ENCODE measurements at regions of chr4 and their contacts with region 1.

Region 1: GRCh38 chr4:88823058-88823919 is 125.7 kb upstream of the NAP1L5 start:
- DNase-seq: peak; percentile 83 to 87 (median 85)
- H3K4me3 ChIP-seq: peak overlapping the region; percentile 68 to 93 (median 73)
- H3K4me3 Mint-ChIP-seq: peak overlapping the region; percentile 90 to 98
- H3K27ac ChIP-seq: peak overlapping the region; percentile 66 to 97
- H3K27ac Mint-ChIP-seq: peak overlapping the region; percentile 96 to 100 (median 98)
- H3K4me1 ChIP-seq: peaks cover 40 to 71% of the 10 kb centered on the region in 2 donors
- H3K4me1 Mint-ChIP-seq: peaks cover 43% of the 10 kb centered on the region
- H3K27me3 ChIP-seq: no peaks in the 10 kb centered on the region
- H3K27me3 Mint-ChIP-seq: no peaks in the 10 kb centered on the region
- CTCF ChIP-seq: no peak

Region 2: DNA sequence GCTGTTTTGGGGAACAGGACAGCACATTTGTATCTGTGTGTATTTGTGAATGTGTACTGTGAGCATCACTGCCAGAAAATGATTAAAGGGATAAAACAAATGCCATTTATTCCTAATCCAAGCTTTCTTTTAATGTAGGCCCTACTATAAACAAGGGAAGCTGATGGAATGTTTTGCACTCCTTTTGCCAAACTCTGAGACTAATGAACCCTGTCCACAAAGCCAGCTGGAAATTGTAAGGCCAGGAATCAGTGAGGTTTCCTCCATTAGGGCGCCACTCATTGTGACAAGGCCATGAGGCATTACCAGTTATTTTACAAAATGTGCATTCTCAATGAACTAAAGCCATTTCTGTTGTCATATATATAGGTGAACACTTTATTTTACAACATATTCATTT is 37.3 kb after region 1 on chr4:
- intact Hi-C with region 1: loop called in 1 of 2 experiments (anchors 5 kb)
- DNase-seq: no peak
- H3K4me3 ChIP-seq: no peak overlapping the region
- H3K4me3 Mint-ChIP-seq: no peak overlapping the region
- H3K27ac ChIP-seq: peak overlapping the region in 1 of 2 donors; percentile 83
- H3K27ac Mint-ChIP-seq: peak overlapping the region in 6 of 7 donors; percentile 33 to 98 (median 65)
- H3K4me1 ChIP-seq: peaks cover 41 to 42% of the 10 kb centered on the region in 2 donors
- H3K4me1 Mint-ChIP-seq: peaks cover 43% of the 10 kb centered on the region
- H3K27me3 ChIP-seq: no peaks in the 10 kb centered on the region
- H3K27me3 Mint-ChIP-seq: peaks cover 0 to 1% (median 0%) of the 10 kb centered on the region in 3 donors
- CTCF ChIP-seq: no peak

Region 3: GRCh38 chr4:88919056-88919455 is 95.8 kb after region 1 on chr4:
- intact Hi-C with region 1: no loop called
- DNase-seq: no peak
- H3K4me3 ChIP-seq: no peak overlapping the region
- H3K4me3 Mint-ChIP-seq: no peak overlapping the region
- H3K27ac ChIP-seq: no peak overlapping the region
- H3K27ac Mint-ChIP-seq: no peak overlapping the region
- H3K4me1 ChIP-seq: no peaks in the 10 kb centered on the region
- H3K4me1 Mint-ChIP-seq: no peaks in the 10 kb centered on the region
- H3K27me3 ChIP-seq: no peaks in the 10 kb centered on the region
- H3K27me3 Mint-ChIP-seq: no peaks in the 10 kb centered on the region
- CTCF ChIP-seq: no peak

Region 4: GRCh38 chr4:88953400-88953799 is 130.1 kb after region 1 on chr4:
- intact Hi-C with region 1: loop called in 1 of 2 experiments (anchors 10 kb)
- DNase-seq: peak; percentile 55 to 80 (median 68)
- H3K4me3 ChIP-seq: peak overlapping the region in 1 of 3 experiments; percentile 37
- H3K4me3 Mint-ChIP-seq: peak overlapping the region in 1 of 2 donors; percentile 30
- H3K27ac ChIP-seq: peak overlapping the region; percentile 48 to 49
- H3K27ac Mint-ChIP-seq: peak overlapping the region; percentile 57 to 89 (median 81)
- H3K4me1 ChIP-seq: peaks cover 62 to 68% of the 10 kb centered on the region in 2 donors
- H3K4me1 Mint-ChIP-seq: peaks cover 62% of the 10 kb centered on the region
- H3K27me3 ChIP-seq: no peaks in the 10 kb centered on the region
- H3K27me3 Mint-ChIP-seq: no peaks in the 10 kb centered on the region
- CTCF ChIP-seq: no peak

Region 5: DNA sequence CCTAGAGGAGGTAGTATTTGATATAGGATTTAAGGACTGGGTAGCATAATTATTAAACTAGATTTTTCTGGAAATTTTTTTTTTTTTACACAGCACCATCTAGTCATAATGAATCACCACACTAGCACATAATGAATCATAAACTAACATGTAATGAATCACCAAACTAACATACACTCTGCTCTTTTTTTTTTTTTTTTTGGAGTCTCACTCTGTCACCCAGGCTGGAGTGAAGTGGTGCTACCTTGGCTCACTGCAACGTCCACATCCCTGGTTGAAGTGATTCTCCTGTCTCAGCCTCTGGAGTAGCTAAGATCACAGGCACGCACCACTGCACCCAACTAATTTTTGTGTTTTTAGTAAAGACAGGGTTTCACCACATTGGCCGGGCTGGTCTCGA is 141.2 kb after region 1 on chr4:
- intact Hi-C with region 1: loop called (anchors 10 kb)
- DNase-seq: peak in 2 of 3 donors; percentile 10 to 35
- H3K4me3 ChIP-seq: no peak overlapping the region
- H3K4me3 Mint-ChIP-seq: no peak overlapping the region
- H3K27ac ChIP-seq: peak overlapping the region in 1 of 2 donors; percentile 82
- H3K27ac Mint-ChIP-seq: peak overlapping the region in 5 of 7 donors; percentile 36 to 84 (median 57)
- H3K4me1 ChIP-seq: peaks cover 37 to 52% of the 10 kb centered on the region in 2 donors
- H3K4me1 Mint-ChIP-seq: peaks cover 44% of the 10 kb centered on the region
- H3K27me3 ChIP-seq: no peaks in the 10 kb centered on the region
- H3K27me3 Mint-ChIP-seq: no peaks in the 10 kb centered on the region
- CTCF ChIP-seq: no peak

Region 6: GRCh38 chr4:89024051-89024675 is 200.9 kb after region 1 on chr4:
- intact Hi-C with region 1: loop called (anchors 5 kb)
- DNase-seq: peak; percentile 67 to 87 (median 77)
- H3K4me3 ChIP-seq: no peak overlapping the region
- H3K4me3 Mint-ChIP-seq: no peak overlapping the region
- H3K27ac ChIP-seq: no peak overlapping the region
- H3K27ac Mint-ChIP-seq: no peak overlapping the region
- H3K4me1 ChIP-seq: no peaks in the 10 kb centered on the region
- H3K4me1 Mint-ChIP-seq: peaks cover 5% of the 10 kb centered on the region
- H3K27me3 ChIP-seq: no peaks in the 10 kb centered on the region
- H3K27me3 Mint-ChIP-seq: no peaks in the 10 kb centered on the region
- CTCF ChIP-seq: peak; percentile 87

Region 7: GRCh38 chr4:89101256-89102161 is 278.2 kb after region 1 on chr4:
- intact Hi-C with region 1: loop called in 1 of 2 experiments (anchors 10 kb)
- DNase-seq: peak in 2 of 3 donors; percentile 11 to 57
- H3K4me3 ChIP-seq: no peak overlapping the region
- H3K4me3 Mint-ChIP-seq: no peak overlapping the region
- H3K27ac ChIP-seq: no peak overlapping the region
- H3K27ac Mint-ChIP-seq: peak overlapping the region in 1 of 7 donors; percentile 41
- H3K4me1 ChIP-seq: no peaks in the 10 kb centered on the region
- H3K4me1 Mint-ChIP-seq: peaks cover 3% of the 10 kb centered on the region
- H3K27me3 ChIP-seq: no peaks in the 10 kb centered on the region
- H3K27me3 Mint-ChIP-seq: peaks cover 0 to 2% (median 0%) of the 10 kb centered on the region in 3 donors
- CTCF ChIP-seq: no peak